ENCODE measurements at regions of chr5 and their contacts with region 1.

Region 1: DNA sequence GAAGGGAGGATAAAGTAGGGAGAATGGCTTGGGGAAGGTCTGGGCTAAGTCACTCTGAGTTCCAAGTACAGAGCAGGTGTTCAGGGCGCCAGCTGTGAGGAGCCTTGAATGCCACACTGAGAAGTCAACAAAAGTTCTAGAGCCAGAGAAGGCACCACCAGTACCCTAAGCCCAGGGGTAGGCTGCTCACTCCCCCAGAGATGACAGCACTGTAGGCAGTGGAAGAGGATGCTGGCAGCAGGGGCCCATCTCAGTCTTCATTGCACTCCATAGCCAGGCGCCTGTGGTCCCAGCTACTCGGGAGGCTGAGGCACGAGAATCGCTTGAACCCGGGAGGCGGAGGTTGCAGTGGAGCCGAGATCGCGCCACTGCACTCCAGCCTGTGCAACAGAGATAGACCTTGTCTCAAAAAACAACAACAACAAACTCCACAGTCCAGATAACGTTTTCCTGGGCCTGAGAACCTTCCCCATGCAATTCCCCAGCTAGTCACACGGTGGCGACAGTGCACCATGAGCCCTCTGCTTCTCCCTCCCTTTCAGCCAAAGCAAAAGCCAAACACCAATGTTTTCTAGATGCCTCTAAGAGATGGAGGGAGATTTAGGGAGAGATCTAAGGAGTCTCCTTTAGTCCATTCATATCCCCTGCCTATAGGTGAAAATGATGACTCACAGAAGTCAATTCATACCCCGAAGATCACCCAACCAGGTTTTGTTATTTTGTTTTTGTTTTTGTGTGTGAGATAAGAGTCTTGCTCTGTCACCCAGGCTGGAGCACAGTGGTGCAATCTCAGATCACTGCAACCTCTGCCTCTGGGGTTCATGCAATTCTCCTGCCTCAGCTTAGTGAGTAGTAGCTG is 19.8 kb upstream of the NSD1 start:
- DNase-seq: peak; percentile 59 to 83 (median 75)
- ATAC-seq: peak; percentile 77
- H3K4me3 ChIP-seq: no peak overlapping the region
- H3K4me3 Mint-ChIP-seq: peak overlapping the region in 1 of 10 donors; percentile 47
- H3K27ac ChIP-seq: no peak overlapping the region
- H3K27ac Mint-ChIP-seq: peak overlapping the region in 3 of 9 donors; percentile 33 to 80 (median 67)
- H3K4me1 ChIP-seq: peaks cover 9 to 12% of the 10 kb centered on the region in 2 donors
- H3K4me1 Mint-ChIP-seq: peaks cover 10 to 30% (median 20%) of the 10 kb centered on the region in 7 donors
- H3K27me3 ChIP-seq: no peaks in the 10 kb centered on the region
- H3K27me3 Mint-ChIP-seq: no peaks in the 10 kb centered on the region

Region 2: DNA sequence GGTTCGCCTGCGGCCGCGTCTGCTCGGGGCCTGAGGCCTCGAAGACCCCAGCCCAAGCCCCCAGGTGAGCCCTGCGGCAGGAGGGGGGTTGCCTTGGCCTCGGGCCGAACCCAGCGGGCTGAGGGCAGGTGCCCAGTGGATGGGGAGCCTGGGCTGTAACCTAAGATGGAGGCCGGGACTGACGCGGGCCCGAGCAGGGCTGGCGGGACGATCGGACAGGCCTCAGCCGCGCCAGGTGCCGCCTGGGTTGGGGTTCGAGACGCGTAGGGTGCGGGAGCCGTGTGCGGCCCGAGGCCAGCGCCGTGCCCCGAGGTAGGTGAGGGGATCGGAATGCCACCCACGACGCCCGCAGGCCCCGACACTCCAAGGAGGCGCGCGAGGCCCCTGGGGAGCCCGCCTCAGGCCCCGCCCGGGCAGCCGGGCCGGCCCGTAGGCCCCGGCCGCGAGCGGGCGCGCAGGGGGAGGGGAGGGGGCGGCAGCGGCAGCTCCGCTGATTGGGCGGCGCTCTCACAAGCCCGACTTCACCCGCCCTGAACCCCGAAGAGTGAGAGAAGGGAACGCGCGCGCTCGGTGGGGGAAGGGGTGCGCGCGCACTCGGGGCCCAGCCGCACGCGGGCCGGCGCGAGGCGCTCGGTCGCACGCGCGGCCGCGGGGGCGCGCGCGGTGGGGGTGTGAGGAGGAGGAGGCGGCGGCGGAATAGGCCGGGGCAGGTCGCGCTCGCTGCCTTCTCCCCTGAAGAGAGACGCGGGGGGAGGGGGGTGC is 19.5 kb after region 1 on chr5 and contains the start of gene NSD1:
- CTCF ChIA-PET with region 1: interaction called, 14 read pairs
- POLR2A ChIA-PET with region 1: interaction called, 22 read pairs
- intact Hi-C with region 1: loop called (anchors 1 kb)
- DNase-seq: peak; percentile 86 to 94 (median 93)
- ATAC-seq: peak; percentile 89
- H3K4me3 ChIP-seq: peak within 1 kb of the TSS; percentile 61
- H3K4me3 Mint-ChIP-seq: peak within 1 kb of the TSS; percentile 60 to 88 (median 85)
- H3K27ac ChIP-seq: peak within 1 kb of the TSS; percentile 80
- H3K27ac Mint-ChIP-seq: peak within 1 kb of the TSS; percentile 48 to 95 (median 89)
- H3K4me1 ChIP-seq: peaks cover 47 to 57% of the 10 kb centered on the region in 2 donors
- H3K4me1 Mint-ChIP-seq: peaks cover 34 to 72% (median 65%) of the 10 kb centered on the region in 7 donors
- H3K27me3 ChIP-seq: no peaks in the 10 kb centered on the region
- H3K27me3 Mint-ChIP-seq: no peaks in the 10 kb centered on the region
- total RNA-seq, gene NSD1: 105 to 126 (median 117) TPM

Region 3: GRCh38 chr5:177209610-177210009 is 95.8 kb after region 1 on chr5:
- CTCF ChIA-PET with region 1: interaction called, 3 read pairs
- POLR2A ChIA-PET with region 1: no interaction called
- intact Hi-C with region 1: loop called in 1 of 2 experiments (anchors 10 kb)
- DNase-seq: no peak
- ATAC-seq: no peak
- H3K4me3 ChIP-seq: no peak overlapping the region
- H3K4me3 Mint-ChIP-seq: no peak overlapping the region
- H3K27ac ChIP-seq: no peak overlapping the region
- H3K27ac Mint-ChIP-seq: peak overlapping the region in 1 of 9 donors; percentile 68
- H3K4me1 ChIP-seq: no peaks in the 10 kb centered on the region
- H3K4me1 Mint-ChIP-seq: peaks cover 0 to 14% (median 1%) of the 10 kb centered on the region in 7 donors
- H3K27me3 ChIP-seq: no peaks in the 10 kb centered on the region
- H3K27me3 Mint-ChIP-seq: no peaks in the 10 kb centered on the region

Region 4: GRCh38 chr5:177249761-177250526 is 136.1 kb after region 1 on chr5:
- CTCF ChIA-PET with region 1: interaction called, 11 read pairs
- POLR2A ChIA-PET with region 1: no interaction called
- intact Hi-C with region 1: no loop called
- DNase-seq: no peak
- ATAC-seq: no peak
- H3K4me3 ChIP-seq: no peak overlapping the region
- H3K4me3 Mint-ChIP-seq: no peak overlapping the region
- H3K27ac ChIP-seq: no peak overlapping the region
- H3K27ac Mint-ChIP-seq: peak overlapping the region in 2 of 9 donors; percentile 32 to 34
- H3K4me1 ChIP-seq: no peaks in the 10 kb centered on the region
- H3K4me1 Mint-ChIP-seq: peaks cover 0 to 2% (median 0%) of the 10 kb centered on the region in 7 donors
- H3K27me3 ChIP-seq: no peaks in the 10 kb centered on the region
- H3K27me3 Mint-ChIP-seq: no peaks in the 10 kb centered on the region

Region 5: GRCh38 chr5:177311723-177312648 is 198.2 kb after region 1 on chr5 and contains the start of gene MXD3:
- CTCF ChIA-PET with region 1: interaction called, 8 read pairs
- POLR2A ChIA-PET with region 1: no interaction called
- intact Hi-C with region 1: loop called in 1 of 2 experiments (anchors 2 kb)
- DNase-seq: peak; percentile 87 to 97 (median 92)
- ATAC-seq: peak; percentile 95
- H3K4me3 ChIP-seq: peak within 1 kb of the TSS; percentile 77
- H3K4me3 Mint-ChIP-seq: peak within 1 kb of the TSS; percentile 78 to 93 (median 84)
- H3K27ac ChIP-seq: peak within 1 kb of the TSS; percentile 51
- H3K27ac Mint-ChIP-seq: peak within 1 kb of the TSS in 6 of 9 donors; percentile 42 to 92 (median 59)
- H3K4me1 ChIP-seq: peaks cover 21 to 22% of the 10 kb centered on the region in 2 donors
- H3K4me1 Mint-ChIP-seq: peaks cover 11 to 49% (median 32%) of the 10 kb centered on the region in 7 donors
- H3K27me3 ChIP-seq: no peaks in the 10 kb centered on the region
- H3K27me3 Mint-ChIP-seq: peaks cover 0 to 5% (median 0%) of the 10 kb centered on the region in 5 donors
- total RNA-seq, gene MXD3: 8.8 to 39.8 (median 18.3) TPM

Region 6: GRCh38 chr5:177454397-177455035 is 340.7 kb after region 1 on chr5:
- CTCF ChIA-PET with region 1: no interaction called
- POLR2A ChIA-PET with region 1: no interaction called
- intact Hi-C with region 1: loop called (anchors 5 to 10 kb)
- DNase-seq: peak; percentile 83 to 98 (median 88)
- ATAC-seq: peak; percentile 68
- H3K4me3 ChIP-seq: peak overlapping the region; percentile 70
- H3K4me3 Mint-ChIP-seq: peak overlapping the region; percentile 66 to 92 (median 85)
- H3K27ac ChIP-seq: peak overlapping the region; percentile 97
- H3K27ac Mint-ChIP-seq: peak overlapping the region in 7 of 9 donors; percentile 51 to 95 (median 90)
- H3K4me1 ChIP-seq: peaks cover 12% of the 10 kb centered on the region in 2 donors
- H3K4me1 Mint-ChIP-seq: peaks cover 10 to 27% (median 17%) of the 10 kb centered on the region in 7 donors
- H3K27me3 ChIP-seq: no peaks in the 10 kb centered on the region
- H3K27me3 Mint-ChIP-seq: peaks cover 0 to 22% (median 0%) of the 10 kb centered on the region in 5 donors

Measured in naive thymus-derived CD4-positive, alpha-beta T cell (primary cell).